ENCODE measurements at regions of chr16 and their contacts with region 1.

Region 1: GRCh38 chr16:3264137-3265036 is 8.0 kb upstream of the MEFV start:
- DNase-seq: peak; percentile 96 to 98
- ATAC-seq: peak; percentile 92 to 97 (median 96)
- H3K4me3 ChIP-seq: peak overlapping the region; percentile 39 to 85 (median 77)
- H3K27ac ChIP-seq: peak overlapping the region; percentile 90 to 100 (median 99)
- H3K4me1 ChIP-seq: peaks cover 0 to 39% (median 14%) of the 10 kb centered on the region in 9 donors
- H3K27me3 ChIP-seq: no peaks in the 10 kb centered on the region
- CTCF ChIP-seq: peak in 6 of 9 donors; percentile 12 to 59 (median 42)

Region 2: GRCh38 chr16:3182608-3183444 is 81.6 kb before region 1 on chr16:
- intact Hi-C with region 1: no loop called
- DNase-seq: no peak
- ATAC-seq: peak in 7 of 8 donors; percentile 17 to 62 (median 49)
- H3K4me3 ChIP-seq: peak overlapping the region in 9 of 10 donors; percentile 3 to 45 (median 25)
- H3K27ac ChIP-seq: no peak overlapping the region
- H3K4me1 ChIP-seq: peaks cover 0 to 21% (median 13%) of the 10 kb centered on the region in 9 donors
- H3K27me3 ChIP-seq: peaks cover 35 to 100% (median 100%) of the 10 kb centered on the region in 7 donors
- CTCF ChIP-seq: peak in 5 of 9 donors; percentile 14 to 45 (median 40)

Region 3: GRCh38 chr16:3202903-3203539 is 61.4 kb before region 1 on chr16:
- intact Hi-C with region 1: loop called in 1 of 10 experiments (anchors 10 kb)
- DNase-seq: no peak
- ATAC-seq: no peak
- H3K4me3 ChIP-seq: no peak overlapping the region
- H3K27ac ChIP-seq: no peak overlapping the region
- H3K4me1 ChIP-seq: no peaks in the 10 kb centered on the region
- H3K27me3 ChIP-seq: peaks cover 0 to 40% (median 15%) of the 10 kb centered on the region in 7 donors
- CTCF ChIP-seq: no peak

Region 4: DNA sequence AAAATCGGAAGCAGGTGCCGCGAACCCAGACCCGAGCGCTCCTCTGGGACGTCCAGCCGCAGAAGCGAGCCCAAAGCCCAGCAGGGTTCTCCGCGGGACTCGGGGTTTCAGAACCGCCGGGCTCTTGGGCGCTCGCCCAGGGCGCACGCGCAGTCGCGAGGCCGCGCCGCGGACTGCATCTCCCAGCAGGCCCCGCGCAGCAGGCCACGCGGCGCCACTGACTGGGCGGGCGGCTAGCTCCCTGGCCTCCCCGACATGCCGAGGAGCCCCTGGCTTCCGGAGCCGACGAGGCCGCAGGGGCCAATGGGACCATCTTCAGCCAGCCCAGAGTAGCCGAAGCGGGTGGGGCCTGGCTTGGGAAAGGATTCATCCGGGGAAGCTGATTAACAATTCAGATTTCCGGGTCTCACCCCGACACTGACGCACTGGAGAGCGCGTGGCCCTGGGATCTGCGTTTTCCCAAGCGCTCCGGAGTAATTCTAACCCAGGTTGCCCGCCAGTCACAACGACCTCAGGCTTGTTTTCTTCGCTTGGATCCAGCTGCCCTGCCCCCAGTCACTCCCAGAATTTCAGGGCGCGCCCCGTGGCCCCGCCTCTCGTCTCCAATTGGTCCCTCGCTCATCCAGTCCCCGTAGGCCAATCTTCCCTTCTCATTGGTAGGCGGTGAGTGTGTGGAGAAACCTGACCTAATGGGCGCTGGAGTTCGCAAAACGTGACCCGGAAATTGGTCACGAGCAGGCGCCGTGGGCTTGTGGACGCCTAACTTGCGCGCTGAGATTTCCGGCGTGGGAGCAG is 18.5 kb after region 1 on chr16 and contains the start of gene ZNF263:
- intact Hi-C with region 1: loop called in 4 of 10 experiments (anchors 1 to 2 kb)
- DNase-seq: peak; percentile 94 to 97
- ATAC-seq: peak; percentile 94 to 98 (median 96)
- H3K4me3 ChIP-seq: peak within 1 kb of the TSS; percentile 75 to 100 (median 95)
- H3K27ac ChIP-seq: peak within 1 kb of the TSS; percentile 98 to 99 (median 99)
- H3K4me1 ChIP-seq: peaks cover 9 to 32% (median 26%) of the 10 kb centered on the region in 9 donors
- H3K27me3 ChIP-seq: no peaks in the 10 kb centered on the region
- CTCF ChIP-seq: no peak
- total RNA-seq, gene ZNF263: 7.2 to 13.2 (median 9.2) TPM

Region 5: DNA sequence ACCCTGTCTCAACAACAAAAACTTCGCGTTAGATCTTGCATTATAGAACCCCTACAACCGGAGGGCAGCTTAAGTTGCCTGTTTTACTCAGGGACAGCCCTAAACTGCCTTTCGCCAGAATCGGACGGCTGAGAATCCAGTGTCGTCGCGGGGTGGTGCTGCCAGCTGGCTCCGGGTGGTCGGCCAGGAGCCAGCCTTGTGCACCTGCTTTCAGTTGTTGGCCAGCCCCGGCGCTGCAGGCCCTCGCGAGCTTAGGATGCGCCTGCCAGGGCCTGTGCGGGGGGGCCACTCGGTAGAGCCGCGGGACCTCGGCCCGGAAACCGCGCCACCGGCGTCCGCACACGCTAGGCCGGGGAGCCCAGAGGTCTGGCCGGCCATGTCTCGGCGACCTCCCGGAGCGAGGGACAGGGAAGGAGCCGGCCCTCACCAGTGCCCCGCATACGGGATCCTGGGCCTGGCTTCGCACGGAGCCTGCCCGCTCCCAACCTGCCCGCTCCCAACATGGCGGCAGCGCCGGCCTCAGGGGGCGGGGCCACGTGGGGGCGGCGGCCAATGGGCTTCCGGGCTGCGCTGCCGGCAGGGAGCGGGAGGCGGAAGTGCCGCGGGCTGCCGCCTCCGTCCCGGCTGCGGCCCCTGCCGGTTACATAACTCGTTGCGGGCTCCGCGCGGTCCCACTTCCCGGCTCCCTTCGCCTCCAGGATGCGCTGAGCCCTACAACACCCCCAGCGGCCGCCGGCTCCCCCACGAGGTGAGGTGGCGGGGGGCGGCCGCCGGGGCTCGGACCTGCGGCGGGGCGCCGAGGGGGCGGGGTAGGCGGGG is 193.3 kb after region 1 on chr16:
- intact Hi-C with region 1: loop called in 2 of 10 experiments (anchors 2 to 10 kb)
- DNase-seq: peak; percentile 87 to 91
- ATAC-seq: peak; percentile 86 to 96 (median 94)
- H3K4me3 ChIP-seq: peak overlapping the region; percentile 65 to 95 (median 83)
- H3K27ac ChIP-seq: peak overlapping the region; percentile 92 to 99 (median 98)
- H3K4me1 ChIP-seq: peaks cover 41 to 70% (median 56%) of the 10 kb centered on the region in 9 donors
- H3K27me3 ChIP-seq: no peaks in the 10 kb centered on the region
- CTCF ChIP-seq: peak in 8 of 9 donors; percentile 39 to 71 (median 59)

Region 6: DNA sequence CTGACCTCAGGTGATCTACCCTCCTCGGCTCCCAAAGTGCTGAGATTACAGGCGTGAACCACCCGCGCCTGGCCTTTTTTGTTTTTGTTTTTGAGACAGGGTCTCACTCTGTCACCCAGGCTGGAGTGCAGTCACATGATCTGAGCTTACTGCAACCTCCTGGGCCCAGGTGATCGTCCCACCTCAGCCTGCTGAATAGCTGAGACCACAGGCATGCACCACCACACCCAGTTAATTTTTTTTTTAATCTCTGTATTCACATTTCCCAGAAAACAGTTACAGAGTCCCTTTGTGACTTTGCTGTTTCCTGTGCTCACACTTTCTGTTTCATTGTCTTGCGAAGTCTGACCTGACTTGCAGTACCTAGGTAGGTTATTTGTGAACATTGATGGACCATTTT is 239.1 kb after region 1 on chr16:
- intact Hi-C with region 1: loop called in 6 of 10 experiments (anchors 5 to 10 kb)
- DNase-seq: no peak
- ATAC-seq: no peak
- H3K4me3 ChIP-seq: no peak overlapping the region
- H3K27ac ChIP-seq: peak overlapping the region in 1 of 10 donors; percentile 73
- H3K4me1 ChIP-seq: peaks cover 2 to 47% (median 12%) of the 10 kb centered on the region in 9 donors
- H3K27me3 ChIP-seq: no peaks in the 10 kb centered on the region
- CTCF ChIP-seq: no peak

Measured in heart right ventricle (tissue), 16 donors.